Activated T-helper 1 cell treated with anti-CD3 and anti-CD28 coated beads, Interleukin-12 subunit alpha, Interleukin-12 subunit beta, Interleukin-2, Interleukin-4 antibody, amounts not matched to agents 30 ng/mL and 10 ng/mL and 1 ng/mL, durations not matched to agents 14 hours and 24 hours and 36 hours (primary cell): ENCODE measurements at regions of chrX and their contacts with region 1.

Region 1: DNA sequence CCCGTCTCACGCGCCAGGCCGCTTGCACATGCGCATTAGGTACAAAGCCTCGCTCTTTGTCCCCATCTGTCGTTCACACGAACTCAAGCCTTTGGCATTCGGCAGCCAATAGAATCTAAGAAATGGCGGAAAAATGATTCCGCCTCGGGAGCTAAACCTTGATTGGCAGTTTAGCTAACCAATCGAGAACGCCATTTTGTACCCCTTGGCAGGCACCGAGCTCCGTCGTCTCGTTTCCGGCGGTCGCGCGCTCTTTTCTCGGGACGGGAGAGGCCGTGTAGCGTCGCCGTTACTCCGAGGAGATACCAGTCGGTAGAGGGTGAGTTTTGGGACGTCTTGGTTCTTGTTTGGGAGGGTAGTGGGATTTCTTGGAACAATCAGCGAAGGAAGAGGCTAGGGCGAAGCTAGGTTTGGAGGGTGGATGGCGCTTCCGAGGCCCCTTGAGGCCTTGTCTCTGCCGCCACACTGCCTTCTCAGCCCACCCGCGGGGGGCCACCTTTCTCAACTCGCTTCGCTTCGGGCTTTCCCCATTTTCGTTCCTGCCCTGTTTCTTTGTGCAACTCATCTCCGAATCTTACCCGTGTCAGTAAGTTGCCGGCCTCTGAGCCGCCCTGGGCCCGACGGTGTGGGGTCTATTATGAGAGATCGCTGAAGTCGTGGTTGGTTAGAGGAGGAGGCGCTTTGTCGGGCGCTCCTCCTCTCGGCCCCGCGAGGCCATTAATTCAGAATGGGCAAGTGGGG is at the start of gene NONO:
- DNase-seq: peak; percentile 84
- H3K4me3 Mint-ChIP-seq: peak within 1 kb of the TSS; percentile 94
- H3K27ac Mint-ChIP-seq: peak within 1 kb of the TSS; percentile 98
- H3K4me1 Mint-ChIP-seq: peaks cover 15% of the 10 kb centered on the region
- H3K27me3 Mint-ChIP-seq: no peaks in the 10 kb centered on the region
- total RNA-seq, gene NONO: 512 and 546 TPM in 2 replicates

Region 2: GRCh38 chrX:71095543-71095911 is 188.0 kb before region 1 on chrX and contains the start of gene FOXO4:
- intact Hi-C with region 1: loop called (anchors 1 kb)
- DNase-seq: peak; percentile 81
- H3K4me3 Mint-ChIP-seq: peak within 1 kb of the TSS; percentile 93
- H3K27ac Mint-ChIP-seq: peak within 1 kb of the TSS; percentile 91
- H3K4me1 Mint-ChIP-seq: peaks cover 33% of the 10 kb centered on the region
- H3K27me3 Mint-ChIP-seq: peaks cover 8% of the 10 kb centered on the region
- total RNA-seq, gene FOXO4: 10.7 and 11.9 TPM in 2 replicates

Region 3: DNA sequence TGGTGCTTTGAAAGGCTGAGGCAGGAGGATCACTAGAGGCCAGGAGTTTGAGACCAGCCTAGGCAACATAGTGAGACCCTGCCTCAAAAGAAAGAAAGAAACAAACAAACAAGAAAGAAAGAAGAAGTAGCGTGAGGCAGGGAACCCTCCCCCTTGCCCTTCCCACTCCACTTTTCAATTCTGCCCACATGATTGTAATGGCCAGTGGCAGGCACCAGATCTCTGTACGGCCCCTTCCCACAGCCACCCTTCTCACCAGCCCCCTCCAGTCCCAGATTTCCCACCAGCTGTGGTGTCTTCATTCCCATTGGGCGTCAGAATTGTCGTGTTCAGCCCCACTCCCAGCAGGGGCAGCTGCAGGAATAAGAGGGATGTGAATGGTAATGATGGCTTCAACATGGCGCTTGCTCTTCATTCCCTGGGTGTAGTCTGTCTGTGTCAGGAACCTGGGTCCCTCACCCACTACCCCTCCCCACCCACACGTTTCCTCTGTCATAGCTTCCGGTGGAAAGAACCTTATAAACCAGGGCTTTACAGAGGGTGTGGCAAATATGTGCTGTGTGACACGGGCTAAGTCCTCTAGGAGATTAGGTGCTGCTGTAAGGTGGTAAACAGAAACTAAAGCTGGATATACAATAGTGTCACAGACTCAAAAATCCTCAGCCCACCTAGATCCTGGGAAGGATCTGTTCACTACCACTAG is 172.3 kb before region 1 on chrX and contains the start of gene IL2RG:
- intact Hi-C with region 1: loop called (anchors 5 kb)
- DNase-seq: peak; percentile 75
- H3K4me3 Mint-ChIP-seq: peak within 1 kb of the TSS; percentile 99
- H3K27ac Mint-ChIP-seq: peak within 1 kb of the TSS; percentile 92
- H3K4me1 Mint-ChIP-seq: peaks cover 52% of the 10 kb centered on the region
- H3K27me3 Mint-ChIP-seq: no peaks in the 10 kb centered on the region
- total RNA-seq, gene IL2RG: 375 and 397 TPM in 2 replicates

Region 4: DNA sequence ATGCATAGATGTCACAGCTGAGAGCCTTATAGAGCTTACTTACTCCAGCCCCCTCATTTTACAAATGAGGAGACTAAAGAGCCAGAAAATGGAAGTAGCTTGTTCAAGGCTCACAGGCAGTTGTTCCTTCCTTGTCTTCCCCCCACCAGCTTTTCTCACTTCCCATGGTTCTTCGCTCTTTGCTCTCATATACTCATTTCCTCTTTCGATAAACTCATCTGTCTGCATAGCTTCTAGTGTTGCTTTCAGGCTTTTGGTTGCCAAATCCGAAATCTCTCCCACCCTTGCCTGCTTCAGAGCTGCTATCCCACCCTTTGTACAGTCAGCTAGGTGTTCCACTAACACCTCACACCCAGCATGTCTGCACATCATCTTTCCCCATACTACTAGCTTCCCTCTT is 85.5 kb before region 1 on chrX:
- intact Hi-C with region 1: loop called (anchors 2 kb)
- DNase-seq: no peak
- H3K4me3 Mint-ChIP-seq: peak overlapping the region; percentile 94
- H3K27ac Mint-ChIP-seq: peak overlapping the region; percentile 92
- H3K4me1 Mint-ChIP-seq: peaks cover 21% of the 10 kb centered on the region
- H3K27me3 Mint-ChIP-seq: no peaks in the 10 kb centered on the region

Region 5: GRCh38 chrX:71254092-71254941 is 29.3 kb before region 1 on chrX and contains the start of gene ZMYM3:
- intact Hi-C with region 1: loop called (anchors 1 kb)
- DNase-seq: peak; percentile 69
- H3K4me3 Mint-ChIP-seq: peak within 1 kb of the TSS; percentile 88
- H3K27ac Mint-ChIP-seq: peak within 1 kb of the TSS; percentile 71
- H3K4me1 Mint-ChIP-seq: peaks cover 30% of the 10 kb centered on the region
- H3K27me3 Mint-ChIP-seq: no peaks in the 10 kb centered on the region
- total RNA-seq, gene ZMYM3: 12.6 and 13.2 TPM in 2 replicates

Region 6: GRCh38 chrX:71315917-71316316 is 32.3 kb after region 1 on chrX:
- intact Hi-C with region 1: no loop called
- DNase-seq: no peak
- H3K4me3 Mint-ChIP-seq: no peak overlapping the region
- H3K27ac Mint-ChIP-seq: no peak overlapping the region
- H3K4me1 Mint-ChIP-seq: no peaks in the 10 kb centered on the region
- H3K27me3 Mint-ChIP-seq: no peaks in the 10 kb centered on the region

Region 7: DNA sequence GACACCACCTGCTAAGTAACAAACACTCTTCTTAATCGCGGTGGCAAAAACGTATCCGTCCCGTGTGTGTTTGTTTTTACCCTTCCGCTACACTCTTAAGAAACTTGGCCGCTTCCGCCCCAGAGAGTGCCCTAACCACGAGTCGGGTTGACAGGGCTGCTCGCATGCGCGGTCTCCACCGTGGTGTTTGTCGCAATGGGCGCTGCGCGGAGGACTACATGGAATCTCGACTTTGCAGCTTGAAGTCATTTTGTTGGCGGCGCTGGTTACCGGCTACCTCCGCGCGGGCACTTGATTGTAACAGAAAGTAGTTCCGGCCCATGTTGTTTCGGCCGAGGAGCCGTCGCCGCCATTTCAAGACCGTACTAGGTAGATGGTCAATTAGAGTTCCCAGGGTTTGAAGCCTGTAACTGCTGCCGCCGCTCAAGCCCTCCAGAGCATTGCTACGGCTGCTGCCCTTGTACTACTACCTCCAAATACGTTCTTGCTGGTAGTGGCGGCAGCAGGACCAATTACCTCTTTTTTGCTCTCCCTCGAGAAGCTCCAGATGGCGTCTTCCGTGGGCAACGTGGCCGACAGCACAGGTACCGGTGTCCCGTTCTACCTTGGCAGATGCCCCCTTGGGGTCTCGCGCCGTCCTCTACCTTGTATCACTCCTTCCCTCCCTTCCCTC is 249.3 kb after region 1 on chrX and contains the start of gene OGT:
- intact Hi-C with region 1: loop called (anchors 1 kb)
- DNase-seq: peak; percentile 88
- H3K4me3 Mint-ChIP-seq: peak within 1 kb of the TSS; percentile 95
- H3K27ac Mint-ChIP-seq: peak within 1 kb of the TSS; percentile 100
- H3K4me1 Mint-ChIP-seq: peaks cover 26% of the 10 kb centered on the region
- H3K27me3 Mint-ChIP-seq: no peaks in the 10 kb centered on the region
- total RNA-seq, gene OGT: 295 and 305 TPM in 2 replicates